ENCODE measurements at regions of chr15 and their contacts with region 1.

Region 1: GRCh38 chr15:38683382-38684242 is 119.0 kb upstream of the RASGRP1 start:
- DNase-seq: peak in 9 of 10 donors; percentile 31 to 90 (median 65)

Region 2: DNA sequence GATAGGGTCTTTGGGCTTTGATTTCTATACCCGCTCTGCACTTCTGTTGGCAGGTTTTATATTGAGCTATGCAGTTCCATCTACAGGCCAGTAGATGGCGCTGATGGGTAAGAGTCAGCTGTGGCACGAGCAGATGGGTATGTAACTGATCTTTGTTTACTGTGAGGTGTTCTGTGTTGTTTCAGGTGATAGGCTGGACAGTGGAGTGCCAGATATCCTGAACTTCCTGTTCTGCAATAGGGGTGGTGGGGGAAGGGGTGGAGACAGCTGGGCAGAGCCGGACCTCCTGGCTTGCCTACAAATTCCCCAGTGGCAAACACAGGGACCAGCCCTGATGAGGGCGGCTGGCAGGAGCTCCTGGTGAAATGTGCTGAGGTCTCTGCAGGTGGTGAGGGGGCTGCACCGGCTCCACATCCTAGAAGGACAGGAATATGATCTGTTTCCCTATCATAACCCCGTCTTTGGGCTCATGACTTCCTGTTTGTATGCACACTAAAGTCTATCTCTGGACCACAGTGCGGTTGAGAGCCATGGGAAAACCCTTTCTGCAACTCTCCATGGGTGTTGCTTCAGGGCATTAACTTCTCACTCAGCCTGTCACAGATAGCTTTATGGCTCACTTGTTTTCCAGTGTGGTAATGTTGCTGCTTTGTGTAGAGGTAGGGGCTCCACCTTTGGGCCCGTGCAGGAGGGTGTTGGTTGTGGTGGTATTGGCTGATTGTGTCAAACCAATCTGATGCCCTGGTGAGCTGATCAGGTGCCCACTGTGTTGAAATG is 243.1 kb before region 1 on chr15:
- intact Hi-C with region 1: loop called (anchors 2 kb)
- DNase-seq: peak in 3 of 10 donors; percentile 38 to 84 (median 43)

Region 3: GRCh38 chr15:38474155-38474757 is 209.4 kb before region 1 on chr15:
- intact Hi-C with region 1: loop called (anchors 2 kb)
- DNase-seq: peak in 1 of 10 donors; percentile 14

Region 4: DNA sequence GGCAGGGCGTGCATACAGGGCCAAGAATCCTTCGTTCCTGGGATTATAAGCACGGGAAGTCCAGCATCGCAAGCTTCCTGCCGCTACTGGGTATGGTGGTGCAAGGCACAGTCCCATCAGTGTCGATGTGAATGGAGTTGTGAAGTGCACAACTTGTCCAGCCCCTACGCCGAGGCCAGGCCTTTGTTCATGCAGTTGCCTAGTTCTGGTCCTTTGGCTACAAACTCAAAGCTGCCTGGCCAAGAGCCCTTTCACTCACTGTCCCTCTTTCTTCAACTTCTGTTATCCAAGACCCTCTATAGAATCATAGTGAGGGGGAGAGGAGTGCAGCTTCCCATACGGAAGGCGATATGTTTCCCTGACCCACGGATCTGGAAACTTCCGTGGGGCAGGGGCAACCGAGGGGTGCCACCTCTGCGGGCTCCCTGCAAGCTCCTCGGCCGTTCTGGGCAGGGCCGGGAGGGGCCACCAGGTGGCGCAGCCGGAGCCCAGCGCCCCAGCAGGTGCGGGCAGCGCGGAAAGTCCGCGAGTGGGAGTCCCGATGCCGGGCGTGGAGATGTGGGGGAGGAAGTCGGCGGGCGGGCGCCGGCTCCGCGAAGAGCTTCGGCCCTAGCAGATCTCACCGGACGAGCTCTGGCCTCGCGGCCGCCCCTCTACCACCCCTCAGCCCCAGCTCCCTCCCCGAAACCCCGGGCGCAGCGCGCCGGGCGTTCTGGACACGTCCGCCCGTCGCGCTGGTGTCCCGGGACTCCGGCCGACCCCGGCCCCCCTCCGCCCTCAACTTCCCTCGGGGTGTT is 119.7 kb before region 1 on chr15:
- intact Hi-C with region 1: loop called (anchors 2 kb)
- DNase-seq: peak; percentile 58 to 96 (median 78)